ENCODE measurements at regions of chr17 and their contacts with region 1.

Region 1: DNA sequence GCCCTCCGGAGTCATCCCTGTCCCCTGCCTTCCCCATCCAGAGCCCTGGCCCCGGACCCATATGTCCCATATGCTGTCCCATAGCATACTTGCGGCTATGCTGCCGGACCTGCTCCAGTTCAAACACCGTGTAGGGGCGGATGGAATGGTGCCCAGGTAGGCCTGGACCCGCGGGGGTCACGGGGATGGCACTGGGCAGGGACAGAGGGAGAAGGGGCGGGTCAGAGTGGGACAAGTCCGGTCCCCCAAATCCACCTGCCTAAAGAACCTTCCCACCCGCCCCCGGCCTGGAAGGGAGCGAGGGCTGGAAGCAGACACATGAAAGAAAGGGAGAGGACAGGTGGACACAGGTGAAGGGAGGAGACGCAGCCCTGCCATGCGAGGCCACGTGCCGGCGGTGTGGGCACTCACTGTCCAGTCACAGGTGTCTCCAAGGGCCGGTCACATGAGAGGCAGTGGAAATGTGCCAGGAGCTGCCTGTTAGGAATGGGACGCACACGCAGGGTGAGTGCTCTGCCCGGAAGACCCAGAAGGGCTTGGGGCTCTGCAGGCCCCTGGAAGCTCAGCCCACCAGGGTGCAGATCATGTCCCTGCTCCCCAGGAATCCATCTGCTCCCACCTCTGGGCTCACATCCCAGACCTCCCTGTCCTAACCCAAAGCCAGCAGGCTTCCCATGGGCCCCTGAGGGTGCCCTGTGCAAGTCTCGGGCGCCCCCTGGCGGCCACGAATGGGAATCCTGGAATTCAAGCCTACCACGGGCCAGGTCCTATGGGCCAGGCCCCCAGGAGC is 14.0 kb downstream of the UBALD2 start:
- DNase-seq: no peak
- H3K4me3 ChIP-seq: no peak overlapping the region
- H3K27me3 ChIP-seq: no peaks in the 10 kb centered on the region
- CTCF ChIP-seq: peak; percentile 98

Region 2: DNA sequence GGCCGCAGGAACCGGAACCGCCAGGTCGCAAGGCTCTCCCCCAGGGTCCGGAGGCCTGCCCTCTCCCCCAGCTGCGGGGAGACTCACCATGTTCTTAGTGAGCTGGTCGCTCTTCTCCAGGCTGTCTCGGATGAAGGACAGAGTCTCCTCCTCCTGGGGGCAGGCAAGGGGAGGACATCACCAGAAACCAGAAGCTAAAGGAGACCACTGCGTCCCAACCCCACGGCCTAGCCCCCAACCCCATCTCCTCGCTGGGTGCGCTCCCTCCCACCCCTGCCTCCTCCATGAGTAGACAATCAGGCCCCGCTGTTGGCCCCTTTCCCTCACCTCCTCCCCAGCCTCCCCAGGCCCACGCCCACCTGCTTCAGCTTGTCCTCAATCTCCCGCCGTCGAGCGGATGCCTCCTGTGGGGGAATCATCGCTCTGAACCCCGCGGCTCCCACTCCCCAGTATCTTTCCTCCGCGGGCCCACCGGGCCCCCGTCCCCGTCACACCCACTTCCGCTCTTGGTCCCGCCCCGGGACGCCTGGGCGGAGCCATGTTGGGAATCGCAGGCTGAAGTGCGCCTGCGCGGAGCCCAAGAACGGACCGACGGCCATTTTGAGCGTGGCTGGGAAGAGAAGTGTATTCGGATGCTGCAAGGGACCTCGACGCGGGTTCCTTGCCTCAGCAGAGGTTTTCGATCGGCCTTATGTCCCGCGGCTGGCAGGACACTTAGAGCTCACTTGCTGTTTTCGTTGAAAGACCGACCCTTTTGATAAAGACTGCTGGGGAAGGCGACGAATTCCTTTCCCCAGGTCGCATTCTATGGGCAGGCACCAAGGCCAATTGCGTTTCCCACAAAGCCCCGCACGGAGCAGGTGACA is 175.6 kb before region 1 on chr17 and contains the start of gene EXOC7:
- CTCF ChIA-PET with region 1: interaction called, 15 read pairs
- POLR2A ChIA-PET with region 1: no interaction called
- DNase-seq: peak; percentile 39
- H3K4me3 ChIP-seq: peak within 1 kb of the TSS; percentile 98
- H3K27me3 ChIP-seq: no peaks in the 10 kb centered on the region
- CTCF ChIP-seq: peak; percentile 24; the same call in 1 of the 2 replicates
- polyA plus RNA-seq, gene EXOC7: 91.7 and 122 TPM in 2 replicates

Region 3: DNA sequence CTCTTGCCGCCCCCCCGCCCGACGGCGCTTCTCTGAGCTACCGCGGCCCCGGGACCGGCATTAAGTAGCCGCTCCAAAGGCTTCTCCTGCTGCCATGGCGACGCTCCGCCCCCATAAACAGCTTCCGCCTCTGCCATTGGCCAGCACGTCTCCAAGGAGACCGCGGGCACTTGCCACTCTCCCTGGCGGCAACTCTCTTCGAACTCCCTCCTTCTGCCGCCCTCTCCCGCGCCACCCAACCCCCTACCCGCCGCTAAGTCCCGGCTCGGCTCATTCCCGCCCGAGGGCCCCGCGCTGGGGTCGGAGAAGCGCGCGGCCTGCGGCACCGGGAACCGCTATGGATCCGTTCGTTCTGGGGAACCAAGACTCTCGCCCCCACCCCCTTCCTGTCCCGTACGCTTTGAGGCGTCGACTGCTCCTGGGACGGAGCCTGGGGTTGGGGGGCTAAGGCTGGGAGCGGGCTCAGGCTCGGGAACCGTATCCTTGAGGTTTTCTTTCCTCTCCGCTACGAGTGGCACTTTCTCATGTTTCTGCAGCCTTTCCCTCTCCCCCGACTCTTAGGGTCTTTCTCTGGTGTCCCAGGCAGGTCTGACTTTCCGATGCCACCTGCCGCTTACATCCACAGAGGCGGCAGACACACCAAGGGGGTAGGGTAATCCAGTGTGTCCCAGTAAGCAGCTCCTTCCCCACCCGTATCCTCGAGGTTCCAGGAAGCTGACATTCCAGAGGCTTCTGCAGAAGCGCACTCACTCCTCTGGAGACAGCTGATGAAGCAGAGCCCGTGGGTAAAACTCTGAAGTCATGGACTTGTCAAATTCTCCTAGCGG is 137.7 kb before region 1 on chr17 and contains the start of gene FOXJ1:
- CTCF ChIA-PET with region 1: interaction called, 19 read pairs
- POLR2A ChIA-PET with region 1: no interaction called
- DNase-seq: peak; percentile 40
- H3K4me3 ChIP-seq: peak within 1 kb of the TSS; percentile 52
- H3K27me3 ChIP-seq: peaks cover 30% of the 10 kb centered on the region
- CTCF ChIP-seq: no peak
- polyA plus RNA-seq, gene FOXJ1: not detected in 2 replicates

Region 4: DNA sequence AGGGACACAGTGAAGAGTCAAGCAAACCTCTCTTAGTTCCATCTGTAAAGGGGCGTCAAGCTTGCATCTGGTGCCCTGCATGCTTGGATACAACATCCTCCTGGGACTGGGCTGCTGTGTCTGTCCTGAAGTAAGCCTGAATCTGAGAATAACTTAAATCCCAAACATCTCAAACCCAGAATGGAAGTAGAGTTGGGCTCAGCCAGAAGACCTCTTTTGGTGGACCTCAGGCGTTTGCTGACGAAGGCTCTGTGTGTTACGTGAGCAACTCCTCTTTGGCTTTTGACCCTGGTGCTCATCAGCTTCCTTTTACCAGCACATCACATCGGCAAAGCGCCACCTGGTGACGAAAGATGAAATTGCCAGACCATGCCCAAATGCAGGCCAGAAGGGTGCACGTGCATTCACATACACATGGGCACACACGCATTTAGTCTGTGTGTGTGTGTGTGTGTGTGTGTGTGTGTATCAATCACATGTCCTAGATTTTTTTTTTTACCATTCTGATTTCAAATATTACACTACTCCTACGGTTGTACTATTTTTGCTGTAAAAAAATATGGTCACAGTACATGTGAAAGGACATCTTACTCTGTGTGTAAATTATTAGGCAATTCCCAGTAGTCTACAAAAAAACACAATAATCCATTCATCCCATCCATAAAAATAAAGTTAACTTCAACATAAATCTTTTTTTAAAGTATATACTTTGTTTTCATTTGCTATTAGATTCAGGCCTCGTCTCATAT is 97.0 kb before region 1 on chr17:
- CTCF ChIA-PET with region 1: interaction called, 38 read pairs
- POLR2A ChIA-PET with region 1: no interaction called
- DNase-seq: peak; percentile 35
- H3K4me3 ChIP-seq: no peak overlapping the region
- H3K27me3 ChIP-seq: no peaks in the 10 kb centered on the region
- CTCF ChIP-seq: peak; percentile 90

Region 5: DNA sequence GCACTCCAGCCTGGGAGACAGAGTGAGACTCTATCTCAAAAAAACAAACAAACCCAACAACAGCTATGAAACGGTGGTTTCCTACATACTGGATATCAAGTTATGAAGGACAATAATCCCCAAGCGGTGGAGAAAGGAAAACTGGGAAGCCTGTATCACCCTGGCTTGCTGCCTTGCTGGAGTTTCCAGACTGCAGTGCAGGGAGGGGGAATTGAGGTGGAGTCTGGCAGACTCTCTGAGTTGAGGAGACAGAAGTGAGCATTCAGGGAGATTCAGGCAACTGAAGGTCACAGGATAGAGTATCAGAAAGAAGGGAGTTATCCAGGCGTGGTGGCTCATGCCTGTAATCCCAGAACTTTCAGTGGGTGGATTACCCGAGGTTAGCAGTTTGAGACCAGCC is 17.0 kb after region 1 on chr17:
- CTCF ChIA-PET with region 1: interaction called, 11 read pairs
- POLR2A ChIA-PET with region 1: no interaction called
- DNase-seq: no peak
- H3K4me3 ChIP-seq: no peak overlapping the region
- H3K27me3 ChIP-seq: no peaks in the 10 kb centered on the region
- CTCF ChIP-seq: no peak